ENCODE measurements at regions of chr10 and their contacts with region 1.

Region 1: GRCh38 chr10:132506711-132507408 is 30.7 kb upstream of the INPP5A start:
- DNase-seq: peak; percentile 51
- ATAC-seq: peak; percentile 45

Region 2: GRCh38 chr10:132464253-132465192 is 42.3 kb before region 1 on chr10:
- intact Hi-C with region 1: loop called (anchors 5 kb)
- DNase-seq: peak; percentile 95
- ATAC-seq: peak; percentile 86